ENCODE measurements at regions of chr11 and their contacts with region 1.

Region 1: DNA sequence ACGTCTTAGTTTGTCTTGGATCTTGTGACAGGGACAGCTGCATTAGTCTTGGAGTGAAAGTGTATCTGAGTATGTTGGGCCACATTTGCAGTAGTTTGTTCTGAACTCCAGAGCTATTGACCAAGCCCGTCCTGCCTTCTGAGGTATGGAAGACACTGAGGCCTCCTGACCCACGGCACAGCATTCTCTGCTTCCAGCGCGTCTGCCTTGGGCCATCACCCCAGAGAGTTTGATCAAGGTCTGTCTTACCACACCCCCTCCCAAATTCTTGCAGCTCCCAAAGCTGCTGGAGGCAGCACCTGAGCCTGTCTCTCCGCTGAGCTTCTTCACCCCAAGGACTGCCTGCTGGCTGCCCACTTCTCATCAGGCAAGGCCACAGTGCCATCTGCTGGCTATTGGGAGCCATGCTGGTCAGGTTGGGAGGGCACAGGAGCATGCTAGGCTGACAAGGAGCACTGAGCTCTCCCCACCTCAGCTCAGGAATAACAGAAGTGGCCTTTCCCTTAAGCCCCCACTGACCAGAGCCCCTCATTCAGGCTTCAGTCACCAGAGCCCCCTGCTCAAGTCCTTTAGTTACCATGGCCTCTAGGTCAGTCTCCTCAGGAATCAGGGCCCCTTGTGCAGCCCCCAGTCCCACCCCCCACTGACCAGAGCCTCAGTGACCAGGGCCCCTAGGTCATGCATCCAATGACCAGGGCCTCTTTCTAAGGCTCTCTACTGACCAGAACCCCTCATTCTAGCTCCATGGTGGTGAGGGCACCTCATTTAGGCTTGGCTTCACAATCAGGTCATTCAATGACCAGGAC is 27.2 kb upstream of the SMPD1 start:
- DNase-seq: peak; percentile 81
- H3K4me3 Mint-ChIP-seq: no peak overlapping the region
- H3K27ac Mint-ChIP-seq: no peak overlapping the region
- H3K4me1 Mint-ChIP-seq: no peaks in the 10 kb centered on the region
- H3K27me3 Mint-ChIP-seq: no peaks in the 10 kb centered on the region
- CTCF ChIP-seq: peak; percentile 82

Region 2: DNA sequence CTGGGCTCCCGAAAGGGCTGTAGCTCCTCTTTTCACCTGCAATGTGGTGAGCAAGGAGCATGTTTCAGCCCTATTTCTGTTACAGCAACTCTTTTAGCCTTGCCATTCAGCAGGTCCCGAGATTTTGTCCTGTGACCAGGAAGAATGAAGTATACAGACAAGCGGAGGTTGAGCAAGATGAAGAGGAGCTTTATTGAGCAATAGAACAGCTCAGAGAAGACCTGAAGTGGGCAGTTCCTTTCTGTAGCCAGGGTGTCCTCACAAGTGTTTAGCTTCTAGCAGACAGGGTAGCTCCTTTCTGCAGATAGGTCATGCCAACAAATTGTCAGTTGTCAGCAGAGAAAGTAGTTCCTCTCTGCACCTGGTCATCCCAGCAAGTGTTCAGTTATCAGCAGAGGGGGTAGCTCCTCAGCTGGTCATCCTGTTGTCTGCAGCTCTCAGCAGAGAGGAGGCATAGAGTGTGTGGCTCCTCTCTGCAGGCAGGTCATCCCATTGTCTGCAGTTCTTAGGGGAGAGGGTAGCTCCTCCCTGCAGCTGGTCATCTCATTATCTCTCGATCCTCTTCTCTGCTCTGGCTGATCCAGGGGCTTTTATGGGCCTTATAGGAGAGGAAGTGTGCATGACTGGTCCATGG is 350.9 kb before region 1 on chr11:
- CTCF ChIA-PET with region 1: interaction called, 12 read pairs
- POLR2A ChIA-PET with region 1: interaction called, 3 read pairs
- intact Hi-C with region 1: no loop called
- DNase-seq: peak; percentile 5
- H3K4me3 Mint-ChIP-seq: no peak overlapping the region
- H3K27ac Mint-ChIP-seq: no peak overlapping the region
- H3K4me1 Mint-ChIP-seq: no peaks in the 10 kb centered on the region
- H3K27me3 Mint-ChIP-seq: peaks cover 30% of the 10 kb centered on the region
- CTCF ChIP-seq: no peak

Region 3: GRCh38 chr11:6219359-6219758 is 143.7 kb before region 1 on chr11:
- CTCF ChIA-PET with region 1: interaction called, 14 read pairs
- POLR2A ChIA-PET with region 1: no interaction called
- intact Hi-C with region 1: no loop called
- DNase-seq: peak; percentile 95
- H3K4me3 Mint-ChIP-seq: no peak overlapping the region
- H3K27ac Mint-ChIP-seq: peak overlapping the region; percentile 57
- H3K4me1 Mint-ChIP-seq: peaks cover 13% of the 10 kb centered on the region
- H3K27me3 Mint-ChIP-seq: no peaks in the 10 kb centered on the region
- CTCF ChIP-seq: no peak

Region 4: DNA sequence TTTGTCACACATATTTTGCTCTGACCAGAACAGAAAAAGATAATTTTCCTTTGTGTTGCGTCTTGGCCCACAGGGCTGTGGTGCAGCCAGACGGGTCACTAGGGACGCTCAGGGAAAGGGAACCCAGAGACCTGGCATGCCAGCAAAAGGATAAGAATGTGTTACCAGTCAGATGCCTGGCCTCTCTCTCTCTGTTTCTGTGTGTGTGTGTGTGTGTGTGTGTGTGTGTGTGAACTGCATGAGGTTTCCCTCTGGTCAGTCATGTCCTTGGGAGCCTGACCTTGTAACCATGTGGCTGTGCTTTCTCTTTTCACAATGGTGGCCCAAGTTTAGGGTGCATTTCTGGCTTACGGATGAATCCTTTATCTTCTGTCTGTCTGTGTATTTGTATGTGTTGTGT is 78.1 kb before region 1 on chr11:
- CTCF ChIA-PET with region 1: interaction called, 10 read pairs
- POLR2A ChIA-PET with region 1: no interaction called
- intact Hi-C with region 1: no loop called
- DNase-seq: no peak
- H3K4me3 Mint-ChIP-seq: no peak overlapping the region
- H3K27ac Mint-ChIP-seq: no peak overlapping the region
- H3K4me1 Mint-ChIP-seq: peaks cover 10% of the 10 kb centered on the region
- H3K27me3 Mint-ChIP-seq: peaks cover 11% of the 10 kb centered on the region
- CTCF ChIP-seq: no peak

Region 5: GRCh38 chr11:6333112-6333511 is 30.0 kb before region 1 on chr11:
- CTCF ChIA-PET with region 1: interaction called, 176 read pairs
- POLR2A ChIA-PET with region 1: no interaction called
- intact Hi-C with region 1: no loop called
- DNase-seq: no peak
- H3K4me3 Mint-ChIP-seq: no peak overlapping the region
- H3K27ac Mint-ChIP-seq: no peak overlapping the region
- H3K4me1 Mint-ChIP-seq: no peaks in the 10 kb centered on the region
- H3K27me3 Mint-ChIP-seq: no peaks in the 10 kb centered on the region
- CTCF ChIP-seq: no peak

Region 6: DNA sequence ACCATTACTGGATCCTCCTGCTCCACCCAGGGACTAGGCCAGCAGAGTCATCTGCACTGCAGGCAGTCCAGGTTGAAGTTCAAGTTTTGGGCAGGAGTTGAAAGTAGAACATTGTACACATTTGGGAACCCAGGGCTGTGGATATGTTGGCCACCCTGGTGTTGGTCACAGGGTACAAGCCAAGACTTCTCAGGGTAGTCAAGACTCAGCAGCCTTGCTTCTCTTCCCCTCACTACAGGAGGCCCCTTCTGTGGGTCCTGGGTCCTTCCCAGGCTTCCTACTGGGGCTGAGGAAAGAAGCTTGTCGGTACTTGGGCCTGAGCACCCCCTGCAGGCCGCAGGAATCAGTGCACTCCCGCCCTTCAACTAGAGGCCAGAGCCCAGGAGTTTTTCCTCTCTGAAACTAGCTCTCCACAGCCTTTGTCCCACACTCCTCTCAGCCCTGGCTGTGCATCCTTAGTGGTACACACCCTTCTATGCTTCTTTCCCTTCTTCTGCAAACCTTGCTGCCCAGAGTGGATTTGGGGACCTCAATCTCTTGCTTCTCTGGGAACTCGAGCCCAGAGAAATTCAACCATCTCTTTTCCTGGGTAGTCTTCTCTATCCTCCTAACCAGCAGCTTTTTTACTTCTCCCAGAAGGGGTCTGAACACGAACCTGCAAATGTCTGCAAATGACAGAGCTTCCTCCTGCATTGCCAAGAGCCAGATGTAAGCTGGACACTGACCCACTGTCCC is 80.4 kb after region 1 on chr11:
- CTCF ChIA-PET with region 1: interaction called, 10 read pairs
- POLR2A ChIA-PET with region 1: no interaction called
- intact Hi-C with region 1: no loop called
- DNase-seq: peak; percentile 57
- H3K4me3 Mint-ChIP-seq: no peak overlapping the region
- H3K27ac Mint-ChIP-seq: no peak overlapping the region
- H3K4me1 Mint-ChIP-seq: no peaks in the 10 kb centered on the region
- H3K27me3 Mint-ChIP-seq: no peaks in the 10 kb centered on the region
- CTCF ChIP-seq: peak; percentile 88

Measured in MCF 10A (cell line).